ENCODE measurements at regions of chr1 and their contacts with region 1.

Region 1: DNA sequence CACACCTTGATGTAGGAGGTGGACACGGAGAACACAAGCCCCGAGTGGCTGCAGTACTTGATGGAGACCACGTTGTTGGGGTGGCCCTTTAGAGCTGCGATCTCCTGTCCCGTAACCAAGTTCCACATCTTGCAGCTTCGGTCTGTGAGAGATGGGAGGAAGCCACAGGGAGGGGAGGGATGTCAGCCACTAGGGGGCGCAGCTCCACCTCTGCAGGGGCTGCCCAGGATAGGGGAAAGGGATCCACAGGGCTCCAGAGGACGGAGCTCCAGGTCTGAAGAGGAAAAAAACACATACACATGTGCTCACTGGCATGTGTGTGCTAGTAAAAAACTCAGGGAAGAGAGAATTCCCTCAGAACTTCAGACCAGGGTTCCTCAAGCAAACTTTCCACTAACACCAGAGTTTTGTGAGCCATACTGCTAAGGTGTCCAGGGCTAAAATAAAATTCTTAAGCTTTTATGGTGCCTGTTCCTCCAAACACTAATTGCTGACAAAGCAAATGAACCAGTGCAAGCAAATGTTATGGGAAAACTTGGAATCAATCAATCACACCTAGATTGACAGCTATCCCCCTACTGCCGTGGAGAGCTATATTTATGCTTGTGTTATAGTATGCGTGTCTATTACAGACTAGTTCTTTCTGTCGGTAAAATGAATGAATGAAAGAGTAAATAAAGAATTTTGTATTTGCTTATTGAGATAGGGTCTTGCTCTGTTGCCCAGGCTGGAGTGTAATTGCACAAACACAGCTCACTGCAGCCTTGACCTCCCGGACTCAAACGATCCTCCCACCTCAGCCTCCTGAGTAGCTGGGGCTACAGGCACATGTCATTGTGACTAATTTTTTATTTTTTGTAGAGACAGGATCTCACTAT is 43.7 kb downstream of the KIF21B start:
- DNase-seq: peak; percentile 79
- ATAC-seq: peak; percentile 69
- H3K4me3 Mint-ChIP-seq: no peak overlapping the region
- H3K27ac Mint-ChIP-seq: no peak overlapping the region
- H3K4me1 Mint-ChIP-seq: no peaks in the 10 kb centered on the region
- H3K27me3 Mint-ChIP-seq: no peaks in the 10 kb centered on the region
- CTCF ChIP-seq: peak; percentile 87

Region 2: GRCh38 chr1:200992382-200993048 is 12.7 kb after region 1 on chr1:
- CTCF ChIA-PET with region 1: interaction called, 29 read pairs
- POLR2A ChIA-PET with region 1: interaction called, 5 read pairs
- intact Hi-C with region 1: no loop called
- DNase-seq: no peak
- ATAC-seq: no peak
- H3K4me3 Mint-ChIP-seq: no peak overlapping the region
- H3K27ac Mint-ChIP-seq: no peak overlapping the region
- H3K4me1 Mint-ChIP-seq: no peaks in the 10 kb centered on the region
- H3K27me3 Mint-ChIP-seq: no peaks in the 10 kb centered on the region
- CTCF ChIP-seq: no peak

Region 3: DNA sequence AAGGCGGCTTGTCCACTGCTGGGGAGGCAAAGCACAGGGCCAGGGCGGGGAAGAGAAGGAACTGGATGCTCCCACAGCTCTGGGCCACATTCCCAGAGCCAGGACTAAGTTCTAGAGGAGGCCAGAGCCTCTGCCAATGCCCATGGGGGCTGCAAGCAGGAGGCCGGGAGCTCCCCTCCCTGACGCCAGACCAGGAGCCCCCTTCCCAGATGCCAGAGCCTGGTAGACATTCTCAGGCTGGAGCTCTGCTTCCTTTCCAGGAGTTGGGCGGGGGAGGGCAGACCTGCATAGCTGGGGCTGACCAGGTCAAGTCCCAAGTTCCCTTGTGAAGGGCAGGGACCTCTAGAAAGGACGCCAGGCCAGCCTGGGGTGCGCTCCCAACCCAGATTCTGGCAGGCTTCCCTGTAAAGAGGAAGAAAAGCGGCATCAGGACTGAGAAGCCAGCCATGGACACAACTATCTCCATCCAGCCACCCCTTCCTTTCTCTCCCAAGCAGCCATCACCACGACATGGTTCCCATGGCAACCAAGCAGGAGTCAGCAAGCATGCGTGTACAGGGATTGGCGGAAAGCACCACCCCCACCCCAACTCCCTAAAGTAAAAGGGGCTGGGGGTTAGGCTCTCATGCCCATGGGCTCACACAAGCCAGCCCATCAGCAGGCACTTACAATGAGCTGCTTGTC is 30.3 kb after region 1 on chr1:
- CTCF ChIA-PET with region 1: interaction called, 20 read pairs
- POLR2A ChIA-PET with region 1: interaction called, 3 read pairs
- intact Hi-C with region 1: no loop called
- DNase-seq: no peak
- ATAC-seq: no peak
- H3K4me3 Mint-ChIP-seq: no peak overlapping the region
- H3K27ac Mint-ChIP-seq: peak overlapping the region; percentile 58
- H3K4me1 Mint-ChIP-seq: peaks cover 56% of the 10 kb centered on the region
- H3K27me3 Mint-ChIP-seq: no peaks in the 10 kb centered on the region
- CTCF ChIP-seq: no peak

Region 4: DNA sequence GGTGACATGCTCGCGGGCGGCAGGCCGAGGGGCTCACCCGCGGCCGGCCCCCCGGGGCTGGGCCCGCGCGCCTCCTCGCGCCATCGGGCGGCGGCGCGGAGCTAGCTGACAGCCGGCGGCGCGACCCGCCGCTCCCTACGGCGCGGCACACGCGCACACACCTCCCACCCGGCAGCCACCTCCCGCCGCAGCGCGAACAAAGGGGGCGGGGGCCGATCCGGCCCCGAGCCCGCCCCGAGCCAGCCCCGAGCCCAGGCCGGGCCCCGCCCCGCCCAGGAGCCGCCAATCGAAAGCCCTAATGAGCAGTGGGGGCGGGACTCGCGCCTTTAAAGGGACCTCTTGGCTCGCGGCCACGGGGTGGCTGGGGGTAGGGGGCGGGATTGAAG is 43.7 kb after region 1 on chr1 and contains the start of gene KIF21B:
- CTCF ChIA-PET with region 1: interaction called, 109 read pairs
- POLR2A ChIA-PET with region 1: interaction called, 6 read pairs
- intact Hi-C with region 1: no loop called
- DNase-seq: peak; percentile 92
- ATAC-seq: peak; percentile 70
- H3K4me3 Mint-ChIP-seq: peak within 1 kb of the TSS; percentile 91
- H3K27ac Mint-ChIP-seq: peak within 1 kb of the TSS; percentile 97
- H3K4me1 Mint-ChIP-seq: peaks cover 60% of the 10 kb centered on the region
- H3K27me3 Mint-ChIP-seq: no peaks in the 10 kb centered on the region
- CTCF ChIP-seq: no peak
- total RNA-seq, gene KIF21B: 93.5 to 94.0 TPM

Region 5: GRCh38 chr1:201080135-201080534 is 100.3 kb after region 1 on chr1:
- CTCF ChIA-PET with region 1: interaction called, 13 read pairs
- POLR2A ChIA-PET with region 1: no interaction called
- intact Hi-C with region 1: no loop called
- DNase-seq: no peak
- ATAC-seq: no peak
- H3K4me3 Mint-ChIP-seq: no peak overlapping the region
- H3K27ac Mint-ChIP-seq: no peak overlapping the region
- H3K4me1 Mint-ChIP-seq: no peaks in the 10 kb centered on the region
- H3K27me3 Mint-ChIP-seq: no peaks in the 10 kb centered on the region
- CTCF ChIP-seq: no peak

Region 6: GRCh38 chr1:201119206-201120197 is 139.7 kb after region 1 on chr1:
- CTCF ChIA-PET with region 1: interaction called, 20 read pairs
- POLR2A ChIA-PET with region 1: no interaction called
- intact Hi-C with region 1: loop called (anchors 10 kb)
- DNase-seq: peak; percentile 76
- ATAC-seq: peak; percentile 69
- H3K4me3 Mint-ChIP-seq: no peak overlapping the region
- H3K27ac Mint-ChIP-seq: no peak overlapping the region
- H3K4me1 Mint-ChIP-seq: peaks cover 8% of the 10 kb centered on the region
- H3K27me3 Mint-ChIP-seq: peaks cover 4% of the 10 kb centered on the region
- CTCF ChIP-seq: peak; percentile 72

Measured in activated CD8-positive, alpha-beta T cell treated with anti-CD3 and anti-CD28 coated beads for 36 hours (primary cell).